ENCODE measurements at regions of chr6 and their contacts with region 1.

Region 1: GRCh38 chr6:143450453-143451371 is at the starts of genes ADAT2 and PEX3:
- DNase-seq: peak; percentile 97
- ATAC-seq: peak; percentile 95
- H3K4me3 Mint-ChIP-seq: peak within 1 kb of the TSS; percentile 88
- H3K27ac Mint-ChIP-seq: peak within 1 kb of the TSS; percentile 95
- H3K4me1 Mint-ChIP-seq: peaks cover 52% of the 10 kb centered on the region
- H3K27me3 Mint-ChIP-seq: no peaks in the 10 kb centered on the region
- total RNA-seq, gene ADAT2: 23.6 to 26.0 TPM
- total RNA-seq, gene PEX3: 31.1 to 42.2 TPM

Region 2: GRCh38 chr6:142146828-142147662 is 1303.7 kb before region 1 on chr6 and contains the starts of genes NMBR and VTA1:
- CTCF ChIA-PET with region 1: no interaction called
- POLR2A ChIA-PET with region 1: no interaction called
- intact Hi-C with region 1: loop called (anchors 1 to 10 kb)
- DNase-seq: peak; percentile 98
- ATAC-seq: peak; percentile 98
- H3K4me3 Mint-ChIP-seq: peak within 1 kb of the TSS; percentile 97
- H3K27ac Mint-ChIP-seq: peak within 1 kb of the TSS; percentile 95
- H3K4me1 Mint-ChIP-seq: peaks cover 56% of the 10 kb centered on the region
- H3K27me3 Mint-ChIP-seq: no peaks in the 10 kb centered on the region
- total RNA-seq, gene NMBR: not detected
- total RNA-seq, gene VTA1: 55.6 to 73.9 TPM

Region 3: GRCh38 chr6:142885182-142885867 is 565.4 kb before region 1 on chr6:
- CTCF ChIA-PET with region 1: no interaction called
- POLR2A ChIA-PET with region 1: no interaction called
- intact Hi-C with region 1: loop called in 1 of 2 experiments (anchors 5 kb)
- DNase-seq: peak; percentile 55
- ATAC-seq: peak; percentile 82
- H3K4me3 Mint-ChIP-seq: peak overlapping the region; percentile 76
- H3K27ac Mint-ChIP-seq: peak overlapping the region; percentile 99
- H3K4me1 Mint-ChIP-seq: peaks cover 88% of the 10 kb centered on the region
- H3K27me3 Mint-ChIP-seq: no peaks in the 10 kb centered on the region

Region 4: GRCh38 chr6:143060354-143060805 is 390.3 kb before region 1 on chr6:
- CTCF ChIA-PET with region 1: no interaction called
- POLR2A ChIA-PET with region 1: no interaction called
- intact Hi-C with region 1: loop called in 1 of 2 experiments (anchors 1 kb)
- DNase-seq: peak; percentile 85
- ATAC-seq: peak; percentile 60
- H3K4me3 Mint-ChIP-seq: peak overlapping the region; percentile 77
- H3K27ac Mint-ChIP-seq: peak overlapping the region; percentile 88
- H3K4me1 Mint-ChIP-seq: peaks cover 30% of the 10 kb centered on the region
- H3K27me3 Mint-ChIP-seq: no peaks in the 10 kb centered on the region

Region 5: GRCh38 chr6:143498428-143498827 is 47.7 kb after region 1 on chr6:
- CTCF ChIA-PET with region 1: no interaction called
- POLR2A ChIA-PET with region 1: no interaction called
- intact Hi-C with region 1: no loop called
- DNase-seq: no peak
- ATAC-seq: peak; percentile 53
- H3K4me3 Mint-ChIP-seq: no peak overlapping the region
- H3K27ac Mint-ChIP-seq: no peak overlapping the region
- H3K4me1 Mint-ChIP-seq: peaks cover 15% of the 10 kb centered on the region
- H3K27me3 Mint-ChIP-seq: no peaks in the 10 kb centered on the region

Region 6: GRCh38 chr6:143510991-143511891 is 60.5 kb after region 1 on chr6 and contains the start of gene FUCA2:
- CTCF ChIA-PET with region 1: no interaction called
- POLR2A ChIA-PET with region 1: interaction called, 4 read pairs
- intact Hi-C with region 1: loop called in 1 of 2 experiments (anchors 1 kb)
- DNase-seq: peak; percentile 80
- ATAC-seq: peak; percentile 85
- H3K4me3 Mint-ChIP-seq: peak within 1 kb of the TSS; percentile 84
- H3K27ac Mint-ChIP-seq: peak within 1 kb of the TSS; percentile 91
- H3K4me1 Mint-ChIP-seq: peaks cover 22% of the 10 kb centered on the region
- H3K27me3 Mint-ChIP-seq: no peaks in the 10 kb centered on the region
- total RNA-seq, gene FUCA2: 6.7 to 7.8 TPM

Region 7: DNA sequence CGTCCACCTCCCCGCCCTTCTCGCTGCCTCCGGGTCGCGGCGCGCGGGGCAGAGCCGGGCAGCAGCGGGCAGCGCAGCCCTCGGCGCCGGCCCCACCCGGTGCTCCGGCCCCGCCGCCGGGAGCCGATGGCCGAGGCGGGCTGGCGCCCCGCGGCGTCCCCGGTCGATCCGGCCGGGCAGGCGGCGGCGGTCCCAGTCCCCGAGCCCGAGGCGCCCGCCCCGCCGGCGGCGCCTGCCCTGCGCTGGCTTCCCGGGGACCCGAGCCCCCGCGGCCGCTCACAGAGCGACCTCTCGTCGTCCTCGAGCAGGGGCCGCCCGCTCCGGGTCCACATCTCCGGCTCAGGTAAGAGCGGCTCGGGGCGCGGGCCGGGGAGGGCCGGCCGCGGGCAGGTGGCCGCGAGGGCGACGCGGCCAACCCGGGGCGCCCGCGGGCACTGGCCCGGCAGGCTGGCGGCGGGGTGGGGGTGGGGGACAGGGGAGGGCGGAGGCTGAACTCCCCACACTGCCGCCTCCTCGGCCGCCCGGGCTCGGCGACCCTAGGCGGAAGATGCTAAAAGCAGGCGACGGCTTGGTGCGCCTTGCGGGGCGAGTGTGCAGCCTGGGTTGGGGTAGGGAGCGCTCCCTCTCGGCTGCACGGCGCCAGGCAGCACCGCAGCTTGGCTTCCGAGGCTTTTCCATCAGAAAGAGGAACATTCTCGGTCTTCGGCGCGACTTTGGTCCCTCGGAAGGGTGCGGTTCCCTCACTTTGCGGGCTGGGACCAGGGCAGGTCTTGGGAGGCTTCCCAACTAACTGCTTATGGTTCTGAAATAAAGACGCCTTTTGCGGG is 86.4 kb after region 1 on chr6:
- CTCF ChIA-PET with region 1: no interaction called
- POLR2A ChIA-PET with region 1: interaction called, 3 read pairs
- intact Hi-C with region 1: loop called (anchors 2 to 5 kb)
- DNase-seq: peak; percentile 81
- ATAC-seq: peak; percentile 73
- H3K4me3 Mint-ChIP-seq: peak overlapping the region; percentile 80
- H3K27ac Mint-ChIP-seq: peak overlapping the region; percentile 84
- H3K4me1 Mint-ChIP-seq: peaks cover 39% of the 10 kb centered on the region
- H3K27me3 Mint-ChIP-seq: no peaks in the 10 kb centered on the region

Region 8: DNA sequence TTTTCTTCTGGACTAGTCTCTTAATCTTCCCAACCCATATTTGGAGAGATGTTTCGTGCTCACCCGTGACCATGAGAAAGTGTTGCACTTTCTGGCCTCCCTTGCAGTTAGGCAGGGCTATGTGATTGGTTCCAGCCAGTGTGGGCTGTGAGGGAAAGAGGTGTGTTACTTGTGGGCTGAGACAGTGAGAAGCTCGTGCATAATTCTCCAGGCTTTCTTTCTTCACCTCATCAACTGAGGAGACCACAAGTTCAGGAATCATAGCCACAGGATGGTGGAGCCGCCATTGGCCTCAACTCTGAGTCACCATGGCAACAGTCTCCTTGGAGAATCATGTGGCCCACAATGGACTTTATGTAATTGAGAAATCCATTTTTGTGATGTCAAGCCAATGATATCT is 118.3 kb after region 1 on chr6:
- CTCF ChIA-PET with region 1: no interaction called
- POLR2A ChIA-PET with region 1: no interaction called
- intact Hi-C with region 1: no loop called
- DNase-seq: no peak
- ATAC-seq: no peak
- H3K4me3 Mint-ChIP-seq: no peak overlapping the region
- H3K27ac Mint-ChIP-seq: no peak overlapping the region
- H3K4me1 Mint-ChIP-seq: peaks cover 27% of the 10 kb centered on the region
- H3K27me3 Mint-ChIP-seq: no peaks in the 10 kb centered on the region

Region 9: DNA sequence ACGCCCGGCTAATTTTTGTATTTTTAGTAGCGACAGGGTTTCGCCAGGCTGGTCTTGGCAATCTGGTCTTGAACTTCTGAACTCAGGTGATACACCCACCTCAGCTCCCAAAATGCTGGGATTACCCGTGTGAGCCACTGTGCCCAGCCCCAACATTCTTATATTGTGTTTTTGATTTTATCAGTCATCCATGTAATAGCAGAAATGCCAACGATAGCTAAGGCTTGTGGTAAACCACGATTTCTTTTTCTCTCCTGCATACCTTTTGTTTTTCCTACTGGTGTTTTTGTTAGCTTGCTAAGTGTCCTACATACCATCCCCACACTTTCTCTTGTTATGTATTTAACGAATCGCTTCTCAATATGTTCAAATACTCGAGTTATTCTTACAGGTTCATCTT is 239.1 kb after region 1 on chr6:
- CTCF ChIA-PET with region 1: no interaction called
- POLR2A ChIA-PET with region 1: no interaction called
- intact Hi-C with region 1: no loop called
- DNase-seq: no peak
- ATAC-seq: no peak
- H3K4me3 Mint-ChIP-seq: no peak overlapping the region
- H3K27ac Mint-ChIP-seq: no peak overlapping the region
- H3K4me1 Mint-ChIP-seq: peaks cover 35% of the 10 kb centered on the region
- H3K27me3 Mint-ChIP-seq: no peaks in the 10 kb centered on the region

Region 10: DNA sequence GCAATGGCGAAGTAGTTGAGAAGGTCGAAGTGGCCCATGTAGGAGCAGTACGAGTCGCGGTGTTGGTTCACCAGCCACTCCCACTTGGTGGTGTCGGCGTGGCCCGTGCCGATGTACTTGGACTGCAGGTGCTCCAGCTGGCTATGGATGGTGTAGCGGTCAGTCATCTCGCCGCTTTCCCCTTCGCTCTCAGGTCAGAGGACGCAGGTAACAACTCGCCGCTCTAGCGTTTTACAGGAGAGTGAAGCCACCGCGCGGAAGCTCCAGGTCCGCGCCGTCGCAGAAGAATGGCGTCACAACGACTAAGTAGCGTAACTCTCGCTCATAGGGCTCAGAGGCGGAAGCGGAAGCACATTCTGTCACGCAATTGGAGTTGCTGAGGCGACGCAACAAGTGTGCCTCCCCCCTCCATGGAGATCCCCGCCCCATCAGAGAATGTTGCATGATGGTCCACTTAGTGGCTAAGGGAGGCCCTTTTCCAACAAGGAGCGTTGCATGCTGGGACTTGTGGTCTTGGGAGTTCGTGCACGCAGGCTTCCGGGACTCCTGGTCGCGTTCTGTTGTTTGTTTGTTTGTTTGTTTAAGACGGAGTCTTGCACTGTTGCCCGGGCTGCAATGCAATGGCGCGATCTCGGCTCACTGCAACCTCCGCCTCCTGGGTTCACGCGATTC is 644.8 kb after region 1 on chr6 and contains the start of gene SF3B5:
- CTCF ChIA-PET with region 1: no interaction called
- POLR2A ChIA-PET with region 1: no interaction called
- intact Hi-C with region 1: loop called in 1 of 2 experiments (anchors 1 kb)
- DNase-seq: peak; percentile 98
- ATAC-seq: peak; percentile 97
- H3K4me3 Mint-ChIP-seq: peak within 1 kb of the TSS; percentile 84
- H3K27ac Mint-ChIP-seq: peak within 1 kb of the TSS; percentile 91
- H3K4me1 Mint-ChIP-seq: peaks cover 22% of the 10 kb centered on the region
- H3K27me3 Mint-ChIP-seq: no peaks in the 10 kb centered on the region
- total RNA-seq, gene SF3B5: 152 to 164 TPM